Endothelial cell of umbilical vein (primary cell): ENCODE measurements at regions of chr6 and their contacts with region 1.

Region 1: GRCh38 chr6:112237595-112237994 is 16.8 kb downstream of the LAMA4 start:
- DNase-seq: peak; percentile 53
- H3K4me3 ChIP-seq: no peak overlapping the region
- H3K27ac ChIP-seq: peak overlapping the region; percentile 99
- H3K4me1 ChIP-seq: peaks cover 86% of the 10 kb centered on the region
- H3K27me3 ChIP-seq: no peaks in the 10 kb centered on the region
- CTCF ChIP-seq: no peak
- POLR2A ChIP-seq: no peak

Region 2: DNA sequence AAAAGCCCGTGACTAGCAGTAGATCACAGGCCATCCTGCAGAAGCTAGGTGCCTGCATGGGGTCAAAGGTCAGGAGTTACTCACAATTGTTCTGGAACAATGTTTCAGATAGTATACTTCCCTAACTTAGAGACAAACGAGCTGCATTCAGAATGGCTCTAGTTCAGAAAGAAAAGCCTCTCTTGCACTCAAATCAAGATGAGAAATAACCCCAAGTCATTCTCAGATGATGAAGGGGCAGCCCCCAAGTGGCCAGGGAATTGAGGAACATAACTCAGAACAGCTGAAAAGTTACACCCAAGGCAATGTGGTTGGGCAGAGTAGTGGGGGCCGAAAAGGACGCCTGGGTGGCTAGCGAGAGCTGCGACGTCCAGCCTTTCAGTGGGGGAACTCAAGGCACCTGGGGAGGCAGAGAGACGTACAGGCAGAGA is 392.1 kb before region 1 on chr6:
- CTCF ChIA-PET with region 1: no interaction called
- POLR2A ChIA-PET with region 1: no interaction called
- dilution Hi-C with region 1: no loop called
- intact Hi-C with region 1: no loop called
- DNase-seq: peak; percentile 48
- H3K4me3 ChIP-seq: no peak overlapping the region
- H3K27ac ChIP-seq: no peak overlapping the region
- H3K4me1 ChIP-seq: peaks cover 20% of the 10 kb centered on the region
- H3K27me3 ChIP-seq: no peaks in the 10 kb centered on the region
- CTCF ChIP-seq: no peak
- POLR2A ChIP-seq: no peak

Region 3: DNA sequence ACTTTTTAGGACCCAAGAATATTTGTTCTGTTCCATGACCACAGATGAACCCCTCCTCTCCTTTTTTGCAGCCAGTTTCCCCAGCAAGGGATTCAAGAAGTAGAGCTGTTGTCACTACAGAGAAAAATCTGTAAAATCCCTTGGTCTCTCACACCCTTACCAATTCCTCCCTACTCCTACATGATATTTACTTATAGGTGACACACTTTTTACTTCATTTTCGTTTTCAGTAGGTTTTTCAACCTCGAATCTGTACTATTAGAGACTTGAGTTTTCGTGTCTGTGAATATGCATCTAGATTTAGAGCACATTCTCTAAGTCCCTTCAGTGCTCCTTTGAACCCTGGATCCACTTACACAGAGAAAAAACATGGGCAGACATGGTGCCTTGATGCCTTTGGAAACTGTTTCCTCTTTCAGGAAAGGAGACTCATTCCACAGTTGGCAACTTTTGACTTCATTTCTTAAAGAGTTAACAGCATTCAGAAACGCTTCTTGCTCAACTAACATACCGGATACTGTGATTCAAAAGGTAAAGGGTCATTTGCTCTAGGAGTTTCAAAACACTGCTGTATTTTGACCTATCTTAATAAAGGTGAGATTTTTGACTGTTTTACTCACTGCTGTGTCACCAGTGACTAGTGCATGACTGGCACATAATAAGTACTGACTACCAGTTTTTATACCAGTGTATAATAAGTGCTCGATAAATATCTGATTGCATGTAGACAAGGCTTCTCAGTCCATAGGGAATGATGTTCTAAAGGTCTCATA is 33.8 kb before region 1 on chr6:
- CTCF ChIA-PET with region 1: interaction called, 4 read pairs
- POLR2A ChIA-PET with region 1: interaction called, 7 read pairs
- dilution Hi-C with region 1: no loop called
- intact Hi-C with region 1: loop called (anchors 1 kb)
- DNase-seq: peak; percentile 94
- H3K4me3 ChIP-seq: no peak overlapping the region
- H3K27ac ChIP-seq: peak overlapping the region; percentile 87
- H3K4me1 ChIP-seq: peaks cover 77% of the 10 kb centered on the region
- H3K27me3 ChIP-seq: no peaks in the 10 kb centered on the region
- CTCF ChIP-seq: no peak
- POLR2A ChIP-seq: no peak

Region 4: DNA sequence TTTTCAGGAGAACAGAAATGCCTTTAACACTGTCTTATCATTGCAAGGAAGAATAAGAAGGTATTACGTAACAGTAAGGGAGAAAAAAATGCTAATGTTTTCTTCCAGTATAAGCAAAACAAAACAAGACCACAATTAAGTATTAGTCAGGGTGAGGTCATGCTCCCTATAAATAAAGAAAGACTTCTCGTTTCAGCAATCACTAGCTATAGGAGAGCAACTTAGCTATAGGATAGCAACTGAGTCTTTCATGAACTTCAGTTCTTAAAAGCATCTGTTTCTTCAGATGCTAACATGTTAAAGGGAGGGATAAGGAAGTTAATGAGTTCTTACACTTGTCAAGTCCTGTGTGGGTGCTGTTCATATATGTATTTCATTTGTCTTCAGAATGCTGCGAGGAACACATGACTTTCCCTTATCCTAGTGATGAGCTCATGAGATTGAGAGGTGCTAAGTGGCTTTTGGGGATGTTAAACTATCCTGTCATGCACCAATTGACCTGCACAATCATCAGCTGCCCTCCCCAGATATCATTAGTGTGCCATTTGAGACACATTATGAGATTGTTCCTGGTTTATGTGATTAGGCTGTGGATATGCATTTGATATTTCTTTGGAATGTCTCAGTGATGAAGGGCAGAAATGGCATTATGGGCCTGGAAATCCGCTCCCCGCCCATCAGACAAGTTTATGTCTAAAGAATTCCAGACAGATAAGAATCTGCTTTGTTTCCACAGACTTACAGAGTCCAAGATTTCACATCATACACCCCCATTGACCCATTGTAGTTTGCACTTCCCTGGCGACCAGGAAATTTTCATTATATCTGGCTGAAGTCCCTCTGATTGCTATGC is 20.7 kb before region 1 on chr6:
- CTCF ChIA-PET with region 1: interaction called, 17 read pairs
- POLR2A ChIA-PET with region 1: interaction called, 25 read pairs
- dilution Hi-C with region 1: no loop called
- intact Hi-C with region 1: no loop called
- DNase-seq: peak; percentile 96
- H3K4me3 ChIP-seq: no peak overlapping the region
- H3K27ac ChIP-seq: peak overlapping the region; percentile 96
- H3K4me1 ChIP-seq: peaks cover 81% of the 10 kb centered on the region
- H3K27me3 ChIP-seq: no peaks in the 10 kb centered on the region
- CTCF ChIP-seq: no peak
- POLR2A ChIP-seq: peak; percentile 93

Region 5: GRCh38 chr6:112223070-112223861 is 14.3 kb before region 1 on chr6:
- CTCF ChIA-PET with region 1: interaction called, 17 read pairs
- POLR2A ChIA-PET with region 1: interaction called, 25 read pairs
- dilution Hi-C with region 1: no loop called
- intact Hi-C with region 1: no loop called
- DNase-seq: no peak
- H3K4me3 ChIP-seq: no peak overlapping the region
- H3K27ac ChIP-seq: peak overlapping the region; percentile 74
- H3K4me1 ChIP-seq: peaks cover 91% of the 10 kb centered on the region
- H3K27me3 ChIP-seq: no peaks in the 10 kb centered on the region
- CTCF ChIP-seq: no peak
- POLR2A ChIP-seq: no peak